HepG2 (cell line): ENCODE measurements at regions of chr2 and their contacts with region 1.

Region 1: DNA sequence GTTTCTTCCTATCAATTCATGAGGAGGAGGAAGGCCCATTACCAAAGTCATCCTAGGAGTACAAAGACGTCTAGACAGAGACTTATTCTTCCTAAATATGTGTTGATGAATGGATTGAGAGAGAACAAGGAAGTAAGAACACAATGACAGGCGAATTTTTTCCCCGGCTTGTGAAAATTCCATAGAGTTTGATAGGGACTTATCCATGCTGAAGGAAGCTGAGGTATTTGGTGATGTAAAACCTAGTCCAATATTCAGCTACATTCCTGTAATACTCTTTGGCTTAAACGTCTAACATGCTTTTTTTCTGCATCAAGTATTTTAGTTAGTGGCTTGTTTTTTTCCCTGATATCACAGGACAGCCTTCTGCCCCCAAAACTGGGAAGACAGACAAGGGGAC is 121.9 kb upstream of the MYT1L start:
- DNase-seq: no peak
- ATAC-seq: no peak
- H3K4me3 ChIP-seq: no peak overlapping the region
- H3K27ac ChIP-seq: no peak overlapping the region
- H3K4me1 ChIP-seq: no peaks in the 10 kb centered on the region
- H3K27me3 ChIP-seq: 0 out of 5 replicates have a peak, but pooled peaks cover 0 to 3% of the 10 kb centered on the region in 2 experiments
- CTCF ChIP-seq: no peak
- EP300 ChIP-seq: no peak
- POLR2A ChIP-seq: no peak
- RAD21 ChIP-seq: no peak

Region 2: GRCh38 chr2:1826226-1826905 is 626.6 kb before region 1 on chr2:
- CTCF ChIA-PET with region 1: no interaction called
- POLR2A ChIA-PET with region 1: no interaction called
- in situ Hi-C with region 1: no loop called
- intact Hi-C with region 1: loop called (anchors 5 kb)
- DNase-seq: no peak
- ATAC-seq: no peak
- H3K4me3 ChIP-seq: no peak overlapping the region
- H3K27ac ChIP-seq: no peak overlapping the region
- H3K4me1 ChIP-seq: no peaks in the 10 kb centered on the region
- H3K27me3 ChIP-seq: peaks cover 16 to 56% of the 10 kb centered on the region in 2 experiments; a peak in 4 of 5 replicates
- CTCF ChIP-seq: no peak
- EP300 ChIP-seq: no peak
- POLR2A ChIP-seq: no peak
- RAD21 ChIP-seq: no peak